ENCODE measurements at regions of chr7 and their contacts with region 1.

Region 1: DNA sequence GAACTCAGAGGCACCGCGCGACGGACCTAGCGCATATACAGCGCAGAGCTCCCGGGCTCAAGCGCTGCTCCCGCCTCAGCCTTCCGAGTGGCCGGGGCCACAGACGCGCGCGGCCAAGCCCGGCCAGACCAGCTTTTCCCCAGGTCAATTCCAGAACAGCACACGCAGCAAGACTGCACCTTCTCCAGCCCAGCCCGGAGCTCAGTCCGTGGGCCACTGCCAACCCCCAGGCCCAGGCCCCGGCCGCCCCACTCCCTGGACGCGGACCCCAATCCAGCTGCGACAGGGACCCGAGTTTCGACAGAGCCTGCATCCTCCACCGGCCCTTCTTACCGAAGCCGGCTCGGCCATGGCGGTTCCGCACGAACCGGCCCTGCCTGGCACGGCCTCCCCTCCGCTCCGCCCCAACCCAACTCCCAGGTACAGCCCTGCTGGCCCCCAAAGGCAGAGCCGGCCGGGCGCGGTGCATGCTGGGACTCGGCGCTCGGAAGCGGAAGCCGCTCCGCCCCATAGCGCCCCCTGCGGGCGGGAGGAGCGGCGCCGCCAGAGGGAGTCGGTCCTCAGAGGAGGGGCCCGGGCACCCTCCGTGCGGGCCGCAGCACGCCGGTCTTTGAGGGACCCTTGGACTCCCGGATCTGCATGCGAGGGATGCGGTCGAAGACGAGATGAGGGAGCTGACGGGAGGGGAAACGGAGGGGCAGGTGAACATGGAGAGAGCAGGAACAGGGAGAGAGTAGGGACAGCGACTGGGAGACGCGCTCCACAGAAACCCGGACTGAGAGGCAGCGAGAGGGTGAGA is at the start of gene ZNF425:
- DNase-seq: peak; percentile 93
- H3K4me3 Mint-ChIP-seq: peak within 1 kb of the TSS; percentile 100
- H3K27ac Mint-ChIP-seq: peak within 1 kb of the TSS; percentile 100
- H3K4me1 Mint-ChIP-seq: peaks cover 28% of the 10 kb centered on the region
- H3K27me3 Mint-ChIP-seq: no peaks in the 10 kb centered on the region
- total RNA-seq, gene ZNF425: 1.1 and 1.2 TPM in 2 replicates

Region 2: DNA sequence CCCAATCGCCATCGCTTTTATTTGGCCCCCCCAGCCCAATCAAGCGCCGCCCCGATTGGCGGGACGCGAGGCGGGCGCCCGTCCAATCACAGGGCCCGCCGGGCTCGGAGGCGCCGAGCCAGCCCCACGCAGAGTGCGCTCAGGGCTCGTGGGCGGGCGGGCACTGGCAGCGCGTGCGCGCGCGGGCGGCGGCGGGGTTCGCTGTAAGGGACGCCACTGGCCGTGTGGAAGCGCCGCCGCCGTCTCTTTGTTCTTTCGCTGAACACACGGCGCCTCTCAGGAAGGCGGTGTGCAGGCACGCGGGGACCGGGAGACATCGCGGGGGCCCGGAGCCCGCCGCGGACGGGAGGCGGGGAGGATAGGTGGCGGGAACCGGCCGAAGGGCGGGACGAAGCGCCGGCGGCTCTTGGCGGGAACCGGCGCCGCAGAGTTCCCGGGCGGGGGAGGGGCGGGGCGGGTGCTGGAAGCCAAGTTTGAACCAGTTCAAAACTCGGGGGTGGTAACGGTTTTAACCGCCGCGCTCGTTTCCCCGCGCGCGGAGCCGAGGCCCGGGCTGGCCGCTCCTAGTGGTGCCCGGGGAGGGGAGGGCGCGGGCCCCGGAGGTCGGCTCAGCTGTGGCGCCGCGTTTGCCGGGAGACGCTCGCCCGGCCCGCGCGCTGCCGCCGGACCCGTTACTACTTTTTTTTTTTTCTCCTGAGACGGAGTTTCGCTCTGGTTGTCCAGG is 241.6 kb before region 1 on chr7:
- intact Hi-C with region 1: loop called (anchors 10 kb)
- DNase-seq: peak; percentile 95
- H3K4me3 Mint-ChIP-seq: peak overlapping the region; percentile 93
- H3K27ac Mint-ChIP-seq: peak overlapping the region; percentile 98
- H3K4me1 Mint-ChIP-seq: peaks cover 43% of the 10 kb centered on the region
- H3K27me3 Mint-ChIP-seq: no peaks in the 10 kb centered on the region

Region 3: GRCh38 chr7:149005241-149006050 is 120.6 kb before region 1 on chr7:
- intact Hi-C with region 1: loop called (anchors 1 kb)
- DNase-seq: peak; percentile 65
- H3K4me3 Mint-ChIP-seq: no peak overlapping the region
- H3K27ac Mint-ChIP-seq: no peak overlapping the region
- H3K4me1 Mint-ChIP-seq: no peaks in the 10 kb centered on the region
- H3K27me3 Mint-ChIP-seq: no peaks in the 10 kb centered on the region

Region 4: GRCh38 chr7:149050941-149051340 is 75.1 kb before region 1 on chr7:
- intact Hi-C with region 1: no loop called
- DNase-seq: no peak
- H3K4me3 Mint-ChIP-seq: no peak overlapping the region
- H3K27ac Mint-ChIP-seq: no peak overlapping the region
- H3K4me1 Mint-ChIP-seq: no peaks in the 10 kb centered on the region
- H3K27me3 Mint-ChIP-seq: peaks cover 6% of the 10 kb centered on the region

Region 5: DNA sequence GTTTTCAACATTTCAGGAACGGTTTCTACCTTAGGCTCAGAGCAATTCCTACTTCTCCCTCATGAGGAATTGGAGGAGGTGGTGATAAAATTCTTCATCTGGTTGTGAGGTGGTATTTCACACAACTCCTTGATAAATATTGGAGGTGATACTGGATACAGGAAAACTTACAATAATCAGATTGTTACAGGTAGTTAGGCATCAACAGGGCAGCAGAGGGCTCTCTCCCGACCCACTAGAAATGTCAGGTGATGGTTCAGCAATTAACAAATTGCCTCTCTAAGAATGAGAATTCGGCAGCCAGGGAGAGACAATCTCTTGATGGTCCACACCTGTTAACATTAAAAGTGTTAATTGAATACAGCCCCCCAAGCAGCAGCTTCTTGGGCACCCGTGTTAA is 58.2 kb before region 1 on chr7:
- intact Hi-C with region 1: loop called (anchors 1 kb)
- DNase-seq: no peak
- H3K4me3 Mint-ChIP-seq: peak overlapping the region; percentile 12
- H3K27ac Mint-ChIP-seq: no peak overlapping the region
- H3K4me1 Mint-ChIP-seq: peaks cover 8% of the 10 kb centered on the region
- H3K27me3 Mint-ChIP-seq: no peaks in the 10 kb centered on the region

Region 6: DNA sequence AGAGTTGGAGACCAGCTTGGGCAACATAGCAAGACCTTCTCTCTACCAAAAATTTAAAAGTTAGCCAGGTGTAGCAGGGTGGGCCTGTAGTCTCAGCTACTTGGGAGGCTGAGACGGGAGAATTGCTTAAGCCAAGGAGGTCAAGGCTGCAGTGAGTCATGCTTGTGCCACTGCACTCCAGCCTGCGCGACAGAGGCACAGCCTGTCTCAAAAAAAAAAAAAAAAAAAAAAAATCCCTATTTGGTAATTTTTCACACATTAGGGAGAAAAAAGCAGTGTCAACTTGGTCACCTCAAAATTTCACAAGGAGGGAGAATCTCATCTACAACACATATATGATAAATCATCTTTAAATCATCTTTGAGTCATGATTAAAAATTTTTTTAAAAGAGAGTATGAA is 14.8 kb after region 1 on chr7:
- intact Hi-C with region 1: no loop called
- DNase-seq: no peak
- H3K4me3 Mint-ChIP-seq: no peak overlapping the region
- H3K27ac Mint-ChIP-seq: no peak overlapping the region
- H3K4me1 Mint-ChIP-seq: peaks cover 10% of the 10 kb centered on the region
- H3K27me3 Mint-ChIP-seq: no peaks in the 10 kb centered on the region

Region 7: DNA sequence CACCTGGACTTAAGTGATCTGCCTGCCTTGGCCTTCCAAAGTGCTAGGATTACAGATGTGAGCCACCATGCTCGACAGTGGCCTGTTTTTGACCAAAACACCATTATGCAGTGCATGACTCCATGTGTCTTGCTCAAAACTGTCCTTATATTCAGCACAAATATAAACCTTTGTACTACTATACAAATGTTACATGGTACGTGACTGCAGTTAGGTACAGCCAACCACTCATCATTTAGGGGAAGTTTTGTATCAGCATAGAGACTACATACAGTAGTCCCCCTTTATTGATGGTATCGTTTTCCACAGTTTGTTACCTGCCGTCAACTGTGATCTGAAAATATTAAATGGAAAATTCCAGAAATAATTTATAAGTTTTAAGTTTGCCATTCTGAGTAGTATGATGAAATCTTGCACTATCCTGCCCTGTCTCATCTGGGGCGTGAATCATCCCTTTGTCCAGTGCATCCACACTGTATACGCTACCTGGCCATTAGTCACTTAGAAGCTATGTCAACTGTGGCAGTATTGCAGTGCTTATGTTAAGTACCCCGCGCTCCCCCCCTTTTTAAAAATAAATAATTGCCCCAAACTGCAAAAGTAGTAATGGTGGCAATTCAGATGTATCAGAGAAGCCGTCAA is 46.0 kb after region 1 on chr7:
- intact Hi-C with region 1: no loop called
- DNase-seq: no peak
- H3K4me3 Mint-ChIP-seq: no peak overlapping the region
- H3K27ac Mint-ChIP-seq: no peak overlapping the region
- H3K4me1 Mint-ChIP-seq: no peaks in the 10 kb centered on the region
- H3K27me3 Mint-ChIP-seq: no peaks in the 10 kb centered on the region

Region 8: DNA sequence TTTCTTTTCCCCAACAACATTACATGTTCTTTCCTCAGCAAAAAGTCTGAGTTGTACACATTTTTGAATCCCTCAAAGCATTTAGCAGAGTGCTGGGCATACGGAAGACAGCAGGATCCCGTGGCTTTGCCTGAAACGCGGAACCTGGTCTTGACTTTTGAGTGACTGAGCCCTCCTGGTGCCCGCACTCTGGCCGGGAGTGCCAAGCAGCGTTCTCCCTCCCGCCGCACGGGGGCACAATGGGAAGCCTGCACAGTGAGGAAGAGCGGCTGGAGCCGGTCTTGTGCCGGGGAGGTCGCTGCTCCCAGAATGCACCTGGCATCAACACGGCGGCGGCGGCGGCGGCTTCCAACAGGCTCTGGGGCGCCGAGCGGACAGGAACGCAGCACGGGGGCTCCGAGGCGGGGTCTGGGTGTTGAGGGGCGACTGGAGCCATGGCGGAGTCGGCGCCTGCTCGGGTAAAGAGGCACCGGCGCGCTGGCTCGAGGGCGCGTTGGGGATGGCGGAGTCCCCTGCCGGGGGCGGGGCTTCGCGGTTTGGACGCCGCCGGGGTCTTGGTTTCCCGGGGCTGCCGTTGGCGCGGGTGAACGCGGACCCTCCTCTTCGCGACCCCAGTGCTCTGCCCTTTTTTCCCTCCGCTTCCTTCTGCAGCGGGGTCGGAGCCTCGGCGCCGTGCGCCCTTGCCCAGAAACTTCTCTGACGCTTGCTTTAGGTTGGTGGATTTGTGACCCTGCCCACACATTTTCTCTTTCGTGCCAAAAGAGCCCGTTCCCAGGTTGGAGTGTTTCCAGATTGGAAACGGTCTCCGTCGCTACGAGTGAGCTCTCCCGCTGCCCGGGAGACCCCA is 113.5 kb after region 1 on chr7 and contains the start of gene ZNF212:
- intact Hi-C with region 1: loop called (anchors 2 kb)
- DNase-seq: peak; percentile 84
- H3K4me3 Mint-ChIP-seq: peak within 1 kb of the TSS; percentile 92
- H3K27ac Mint-ChIP-seq: peak within 1 kb of the TSS; percentile 81
- H3K4me1 Mint-ChIP-seq: peaks cover 27% of the 10 kb centered on the region
- H3K27me3 Mint-ChIP-seq: no peaks in the 10 kb centered on the region
- total RNA-seq, gene ZNF212: 15.0 and 17.8 TPM in 2 replicates